ENCODE measurements at regions of chr2 and their contacts with region 1.

Region 1: GRCh38 chr2:43898134-43898837 is 59.5 kb downstream of the ABCG8 start:
- DNase-seq: no peak
- H3K4me3 ChIP-seq: no peak overlapping the region
- H3K27ac ChIP-seq: no peak overlapping the region
- H3K27me3 ChIP-seq: no peaks in the 10 kb centered on the region
- CTCF ChIP-seq: peak; percentile 28; the same call in 1 of the 2 replicates

Region 2: DNA sequence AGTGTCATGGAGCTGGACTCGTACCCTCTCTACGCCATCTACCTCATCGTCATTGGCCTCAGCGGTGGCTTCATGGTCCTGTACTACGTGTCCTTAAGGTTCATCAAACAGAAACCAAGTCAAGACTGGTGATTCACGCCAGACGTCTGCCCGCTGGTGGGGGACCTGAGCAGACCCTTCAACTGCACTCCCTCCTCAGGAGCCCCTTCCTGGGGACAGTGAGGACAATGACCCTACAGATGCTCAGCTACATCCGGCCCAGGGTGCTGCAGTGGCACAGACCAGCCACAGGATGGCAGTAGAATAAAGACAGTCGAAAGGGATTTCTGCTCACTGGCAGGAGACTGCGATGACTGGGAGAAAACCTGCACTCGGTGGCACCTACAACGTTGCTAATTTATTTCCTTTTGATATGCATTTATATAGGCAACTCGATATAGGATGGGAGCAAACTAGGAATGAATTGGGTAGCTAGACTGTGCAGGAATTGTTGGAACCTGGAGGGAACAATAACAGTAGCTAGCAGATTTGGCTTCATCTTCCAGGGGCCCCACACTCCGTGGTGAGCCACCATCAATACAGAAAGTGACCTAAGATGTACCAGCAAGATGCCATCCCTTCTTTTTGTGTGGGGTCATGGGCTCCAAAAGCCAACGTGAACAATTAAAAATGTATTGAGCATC is 20.4 kb before region 1 on chr2:
- CTCF ChIA-PET with region 1: interaction called, 13 read pairs
- POLR2A ChIA-PET with region 1: interaction called, 8 read pairs
- DNase-seq: peak; percentile 16
- H3K4me3 ChIP-seq: no peak overlapping the region
- H3K27ac ChIP-seq: no peak overlapping the region
- H3K27me3 ChIP-seq: peaks cover 12% of the 10 kb centered on the region
- CTCF ChIP-seq: peak; percentile 98

Measured in AG04450 (cell line).